Activated CD4-positive, alpha-beta memory T cell treated with anti-CD3 and anti-CD28 coated beads for 36 hours (primary cell): ENCODE measurements at regions of chr1 and their contacts with region 1.

Region 1: DNA sequence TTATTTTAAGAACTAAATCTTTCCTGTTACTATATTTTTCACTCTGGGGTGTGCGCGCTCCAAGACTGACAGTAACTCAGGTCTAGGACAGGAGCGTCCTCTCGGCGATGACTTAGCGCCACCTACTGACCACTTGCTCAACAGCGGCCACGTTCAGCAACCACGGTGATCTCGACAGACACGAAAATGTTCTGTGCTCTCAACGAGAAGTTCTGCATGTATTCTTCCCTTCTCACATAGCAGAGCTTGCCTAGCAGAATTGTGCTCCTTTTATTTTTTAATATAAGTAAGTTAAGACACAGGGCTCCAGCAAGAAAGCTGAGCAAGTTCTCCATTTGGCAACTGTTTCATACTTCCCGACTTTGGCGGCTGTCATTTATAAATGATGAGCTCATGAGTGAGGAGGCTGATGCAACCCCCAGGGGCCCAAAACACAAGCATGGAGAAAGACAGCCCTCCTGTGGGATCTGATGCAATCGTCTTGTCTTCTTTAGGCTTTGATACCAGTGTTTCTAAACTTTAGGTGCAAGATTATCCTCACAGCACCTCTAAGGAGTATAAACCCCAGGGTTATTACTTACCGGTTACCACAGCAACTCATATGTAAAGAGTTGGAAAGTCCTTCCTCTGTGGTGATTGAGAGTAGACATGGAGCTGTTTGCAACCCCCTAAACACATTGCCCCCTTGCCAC is 92.6 kb downstream of the HHIPL2 start:
- DNase-seq: peak; percentile 88
- H3K4me3 Mint-ChIP-seq: no peak overlapping the region
- H3K27ac Mint-ChIP-seq: no peak overlapping the region
- H3K4me1 Mint-ChIP-seq: peaks cover 14% of the 10 kb centered on the region
- H3K27me3 Mint-ChIP-seq: no peaks in the 10 kb centered on the region

Region 2: DNA sequence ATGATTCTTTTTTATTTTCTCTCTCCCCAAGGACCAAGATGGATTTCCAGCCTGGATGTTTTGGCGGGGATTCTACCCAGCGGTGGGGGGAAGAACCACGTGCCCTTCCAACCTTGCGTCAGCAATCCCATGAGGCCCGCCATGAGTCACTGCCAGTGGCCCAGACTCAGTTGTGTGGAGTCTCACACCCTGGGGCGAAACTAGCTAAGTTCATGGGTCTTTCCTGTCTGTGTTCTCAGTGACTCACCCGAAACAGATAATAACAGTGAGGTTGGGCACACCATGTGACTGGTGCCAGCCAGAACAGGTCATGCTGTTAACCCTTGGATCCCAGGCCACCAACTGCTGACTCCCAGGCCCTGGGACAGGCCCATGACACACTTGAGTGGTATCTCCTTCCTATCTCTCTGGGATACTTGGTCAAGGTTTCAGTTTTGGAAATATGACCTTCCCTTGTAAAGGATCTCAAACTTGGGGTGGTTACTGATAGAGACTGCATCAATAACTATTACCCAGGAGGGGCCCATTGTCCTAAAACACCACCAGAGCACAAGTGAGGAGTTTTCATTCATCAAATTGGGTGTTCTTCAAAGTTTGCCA is 615.4 kb before region 1 on chr1:
- CTCF ChIA-PET with region 1: no interaction called
- POLR2A ChIA-PET with region 1: no interaction called
- intact Hi-C with region 1: loop called (anchors 10 kb)
- DNase-seq: peak; percentile 88
- H3K4me3 Mint-ChIP-seq: no peak overlapping the region
- H3K27ac Mint-ChIP-seq: peak overlapping the region; percentile 74
- H3K4me1 Mint-ChIP-seq: peaks cover 38% of the 10 kb centered on the region
- H3K27me3 Mint-ChIP-seq: peaks cover 6% of the 10 kb centered on the region

Region 3: GRCh38 chr1:222081859-222082258 is 373.5 kb before region 1 on chr1:
- CTCF ChIA-PET with region 1: no interaction called
- POLR2A ChIA-PET with region 1: no interaction called
- intact Hi-C with region 1: no loop called
- DNase-seq: no peak
- H3K4me3 Mint-ChIP-seq: no peak overlapping the region
- H3K27ac Mint-ChIP-seq: no peak overlapping the region
- H3K4me1 Mint-ChIP-seq: no peaks in the 10 kb centered on the region
- H3K27me3 Mint-ChIP-seq: peaks cover 5% of the 10 kb centered on the region

Region 4: GRCh38 chr1:222095606-222096475 is 359.5 kb before region 1 on chr1:
- CTCF ChIA-PET with region 1: interaction called, 100 read pairs
- POLR2A ChIA-PET with region 1: no interaction called
- intact Hi-C with region 1: loop called (anchors 1 kb)
- DNase-seq: peak; percentile 69
- H3K4me3 Mint-ChIP-seq: no peak overlapping the region
- H3K27ac Mint-ChIP-seq: no peak overlapping the region
- H3K4me1 Mint-ChIP-seq: no peaks in the 10 kb centered on the region
- H3K27me3 Mint-ChIP-seq: no peaks in the 10 kb centered on the region

Region 5: GRCh38 chr1:222266223-222267196 is 188.8 kb before region 1 on chr1:
- CTCF ChIA-PET with region 1: interaction called, 3 read pairs
- POLR2A ChIA-PET with region 1: no interaction called
- intact Hi-C with region 1: loop called (anchors 10 kb)
- DNase-seq: no peak
- H3K4me3 Mint-ChIP-seq: no peak overlapping the region
- H3K27ac Mint-ChIP-seq: no peak overlapping the region
- H3K4me1 Mint-ChIP-seq: peaks cover 2% of the 10 kb centered on the region
- H3K27me3 Mint-ChIP-seq: no peaks in the 10 kb centered on the region

Region 6: GRCh38 chr1:222465211-222466041 is 10.1 kb after region 1 on chr1:
- CTCF ChIA-PET with region 1: interaction called, 13 read pairs
- POLR2A ChIA-PET with region 1: no interaction called
- intact Hi-C with region 1: no loop called
- DNase-seq: peak; percentile 87
- H3K4me3 Mint-ChIP-seq: peak overlapping the region; percentile 79
- H3K27ac Mint-ChIP-seq: peak overlapping the region; percentile 72
- H3K4me1 Mint-ChIP-seq: peaks cover 10% of the 10 kb centered on the region
- H3K27me3 Mint-ChIP-seq: no peaks in the 10 kb centered on the region